Endothelial cell of umbilical vein (primary cell): ENCODE measurements at regions of chr10 and their contacts with region 1.

Region 1: GRCh38 chr10:117216611-117217195 is 19.4 kb downstream of the KCNK18 start:
- DNase-seq: peak; percentile 59
- H3K4me3 ChIP-seq: peak overlapping the region in 2 of 3 experiments; percentile 41 to 50
- H3K27ac ChIP-seq: no peak overlapping the region
- H3K4me1 ChIP-seq: peaks cover 5% of the 10 kb centered on the region
- H3K27me3 ChIP-seq: peaks cover 1 to 7% of the 10 kb centered on the region in 2 experiments
- CTCF ChIP-seq: peak; percentile 99 to 100
- POLR2A ChIP-seq: no peak

Region 2: GRCh38 chr10:116080553-116080952 is 1136.2 kb before region 1 on chr10:
- CTCF ChIA-PET with region 1: no interaction called
- POLR2A ChIA-PET with region 1: no interaction called
- dilution Hi-C with region 1: no loop called
- intact Hi-C with region 1: no loop called
- DNase-seq: no peak
- H3K4me3 ChIP-seq: no peak overlapping the region
- H3K27ac ChIP-seq: no peak overlapping the region
- H3K4me1 ChIP-seq: no peaks in the 10 kb centered on the region
- H3K27me3 ChIP-seq: no peaks in the 10 kb centered on the region
- CTCF ChIP-seq: no peak
- POLR2A ChIP-seq: no peak

Region 3: DNA sequence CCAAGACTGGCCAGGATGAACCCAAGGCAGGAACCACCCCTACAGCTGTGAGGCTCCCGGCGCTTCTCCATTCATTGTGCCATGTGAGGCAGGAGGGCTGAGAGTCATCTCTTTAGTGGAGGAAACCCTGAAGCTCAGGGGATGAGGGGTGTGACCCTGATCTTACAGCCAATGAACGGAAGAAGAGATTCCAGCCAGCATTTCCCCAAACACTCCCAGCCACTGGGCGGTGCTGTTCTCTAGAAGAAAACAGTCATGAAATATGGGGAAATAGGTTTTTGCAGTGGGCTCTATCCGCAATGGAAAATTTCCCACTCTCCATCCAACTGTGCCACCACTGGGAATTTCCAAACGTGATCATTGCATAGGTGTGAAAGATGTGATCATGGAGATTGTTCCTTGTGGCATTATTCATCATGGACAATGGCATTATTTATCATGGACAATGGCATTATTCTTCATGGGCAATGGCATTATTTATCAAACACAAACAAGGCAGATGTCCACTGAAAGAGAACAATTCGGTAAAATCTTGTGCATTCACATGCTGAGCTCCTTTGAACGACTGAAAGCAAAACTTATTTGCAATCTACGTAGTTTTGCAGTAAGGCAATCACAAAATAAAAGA is 10.2 kb after region 1 on chr10:
- CTCF ChIA-PET with region 1: interaction called, 38 read pairs
- POLR2A ChIA-PET with region 1: no interaction called
- dilution Hi-C with region 1: no loop called
- intact Hi-C with region 1: no loop called
- DNase-seq: peak; percentile 18
- H3K4me3 ChIP-seq: no peak overlapping the region
- H3K27ac ChIP-seq: no peak overlapping the region
- H3K4me1 ChIP-seq: no peaks in the 10 kb centered on the region
- H3K27me3 ChIP-seq: no peaks in the 10 kb centered on the region
- CTCF ChIP-seq: peak; percentile 34 to 41
- POLR2A ChIP-seq: no peak

Region 4: DNA sequence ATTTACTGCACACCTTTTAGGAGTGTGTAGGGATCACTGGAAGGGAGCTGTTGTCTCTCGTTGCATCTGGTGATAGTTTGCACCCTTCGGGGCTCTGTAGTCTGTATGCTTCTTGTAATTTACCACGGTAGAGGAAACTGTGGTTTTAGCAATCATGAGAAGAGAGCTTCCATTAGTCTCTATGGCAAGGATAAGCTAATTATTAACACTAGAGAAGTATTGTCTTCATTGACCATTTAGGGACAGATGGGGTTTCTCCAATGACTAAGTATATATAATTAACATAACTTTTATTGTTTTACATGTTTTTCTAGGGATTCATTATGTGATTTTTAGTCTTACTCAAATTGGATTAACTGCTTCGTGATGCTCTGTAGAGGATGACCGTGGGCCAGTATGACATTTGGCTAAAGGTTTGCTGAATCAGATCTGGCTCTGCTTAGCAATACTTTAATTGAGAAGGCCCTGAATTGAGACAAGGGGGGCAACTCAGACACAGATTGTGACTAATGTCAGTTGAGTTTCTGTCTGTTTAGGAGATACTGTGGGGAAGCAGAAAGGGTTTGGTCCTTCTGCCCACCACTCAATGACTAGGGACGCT is 32.9 kb after region 1 on chr10:
- CTCF ChIA-PET with region 1: interaction called, 10 read pairs
- POLR2A ChIA-PET with region 1: no interaction called
- dilution Hi-C with region 1: no loop called
- intact Hi-C with region 1: no loop called
- DNase-seq: no peak
- H3K4me3 ChIP-seq: no peak overlapping the region
- H3K27ac ChIP-seq: no peak overlapping the region
- H3K4me1 ChIP-seq: no peaks in the 10 kb centered on the region
- H3K27me3 ChIP-seq: peaks cover 0 to 4% of the 10 kb centered on the region in 2 experiments
- CTCF ChIP-seq: no peak
- POLR2A ChIP-seq: no peak

Region 5: GRCh38 chr10:117375360-117376178 is 158.9 kb after region 1 on chr10 and contains the start of gene PDZD8:
- CTCF ChIA-PET with region 1: interaction called, 4 read pairs
- POLR2A ChIA-PET with region 1: no interaction called
- dilution Hi-C with region 1: no loop called
- intact Hi-C with region 1: loop called (anchors 1 kb)
- DNase-seq: peak; percentile 92
- H3K4me3 ChIP-seq: peak within 1 kb of the TSS; percentile 47 to 88 (median 84)
- H3K27ac ChIP-seq: peak within 1 kb of the TSS; percentile 83
- H3K4me1 ChIP-seq: peaks cover 21% of the 10 kb centered on the region
- H3K27me3 ChIP-seq: peaks cover 22 to 29% of the 10 kb centered on the region in 2 experiments
- CTCF ChIP-seq: no peak
- POLR2A ChIP-seq: peak; percentile 87
- total RNA-seq, gene PDZD8: 21.9 and 22.6 TPM in 2 replicates

Region 6: DNA sequence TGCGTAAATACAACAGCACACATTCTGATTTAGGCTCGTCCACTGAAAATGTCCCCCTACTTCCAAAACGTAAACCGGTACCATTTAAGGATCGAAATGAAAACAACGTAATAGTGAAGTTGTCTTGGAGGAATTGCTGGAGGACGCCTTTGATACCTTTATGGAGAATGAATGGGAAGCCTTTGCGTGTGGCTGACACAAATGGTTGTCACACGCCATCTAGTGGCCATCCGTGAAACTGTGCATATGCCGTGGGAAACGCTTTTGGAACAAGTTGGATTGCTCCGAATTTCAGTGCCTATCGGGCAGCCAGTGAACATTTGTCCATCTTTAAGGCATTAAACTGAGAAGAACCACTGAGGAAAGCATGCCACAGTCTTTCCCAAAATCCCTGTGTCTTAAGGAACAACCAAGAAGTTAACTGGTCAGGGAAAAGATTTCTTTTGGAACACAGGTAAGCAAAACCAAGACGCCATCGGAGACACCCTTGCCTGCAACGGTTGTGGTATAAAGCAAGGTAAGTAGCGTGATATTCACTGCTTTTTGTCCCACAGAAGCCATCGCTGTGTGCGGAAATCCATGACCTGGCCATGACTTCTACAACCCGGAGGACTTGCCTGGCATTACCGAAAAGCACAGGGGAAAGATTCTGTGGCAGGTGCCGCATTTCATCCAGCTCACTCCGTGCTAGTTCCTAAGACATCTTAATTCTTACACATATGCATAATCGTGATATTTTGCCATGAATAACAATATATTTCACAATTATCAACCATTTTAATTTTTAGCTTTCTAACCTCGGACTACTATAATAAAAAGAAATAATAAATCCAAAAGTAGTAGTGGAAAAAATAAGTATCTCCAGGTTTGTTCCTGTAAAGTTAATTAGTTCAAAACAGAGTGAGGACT is 1024.8 kb after region 1 on chr10:
- CTCF ChIA-PET with region 1: interaction called, 25 read pairs
- POLR2A ChIA-PET with region 1: no interaction called
- dilution Hi-C with region 1: no loop called
- intact Hi-C with region 1: loop called (anchors 1 kb)
- DNase-seq: peak; percentile 74
- H3K4me3 ChIP-seq: no peak overlapping the region
- H3K27ac ChIP-seq: no peak overlapping the region
- H3K4me1 ChIP-seq: no peaks in the 10 kb centered on the region
- H3K27me3 ChIP-seq: peaks cover 7 to 12% of the 10 kb centered on the region in 2 experiments
- CTCF ChIP-seq: peak; percentile 81 to 88
- POLR2A ChIP-seq: no peak